Posterior vena cava (tissue), 2 donors: ENCODE measurements at regions of chr12 and their contacts with region 1.

Region 1: GRCh38 chr12:6533923-6534694 is at the start of gene GAPDH:
- DNase-seq: peak; percentile 98
- total RNA-seq, gene GAPDH: 2,037 to 2,666 TPM

Region 2: GRCh38 chr12:6195665-6196535 is 338.2 kb before region 1 on chr12:
- intact Hi-C with region 1: loop called in 1 of 2 experiments (anchors 10 kb)
- DNase-seq: peak; percentile 93

Region 3: GRCh38 chr12:6335451-6336078 is 198.5 kb before region 1 on chr12:
- intact Hi-C with region 1: loop called in 1 of 2 experiments (anchors 5 kb)
- DNase-seq: peak; percentile 95

Region 4: DNA sequence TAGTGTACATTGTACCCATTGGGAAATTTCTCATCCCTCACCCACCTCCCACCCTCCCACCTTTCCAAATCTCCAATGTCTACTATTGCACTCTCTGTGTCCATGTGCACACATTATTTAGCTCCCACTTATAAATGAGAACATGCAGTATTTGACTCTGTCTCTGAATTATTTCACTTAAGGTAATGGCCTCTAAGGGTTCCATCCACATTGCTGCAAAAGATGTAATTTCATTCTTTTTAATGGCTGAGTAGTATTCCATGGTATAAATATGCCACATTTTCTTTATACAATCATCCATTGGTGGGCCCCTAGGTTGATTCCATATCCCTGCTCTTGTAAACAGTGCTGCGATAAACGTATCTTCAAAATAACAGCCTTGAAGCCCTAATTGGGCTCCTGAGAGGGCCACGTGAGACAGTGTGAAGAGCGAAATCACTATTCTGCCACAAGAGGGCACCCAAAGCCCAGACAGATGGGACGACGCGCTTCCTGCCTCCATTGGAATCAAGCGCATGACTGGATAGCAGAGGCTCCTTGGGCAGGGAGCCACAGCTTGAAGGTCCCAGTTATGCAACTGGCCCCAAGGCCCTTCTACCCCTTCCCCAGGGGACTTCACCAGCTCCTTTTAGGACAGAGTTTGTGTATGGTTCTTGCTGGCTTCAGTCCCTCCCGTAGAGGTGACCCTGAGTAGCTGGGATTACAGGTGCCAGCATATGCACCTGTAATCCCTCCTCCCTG is 110.7 kb before region 1 on chr12:
- intact Hi-C with region 1: loop called (anchors 5 kb)
- DNase-seq: peak; percentile 95

Region 5: DNA sequence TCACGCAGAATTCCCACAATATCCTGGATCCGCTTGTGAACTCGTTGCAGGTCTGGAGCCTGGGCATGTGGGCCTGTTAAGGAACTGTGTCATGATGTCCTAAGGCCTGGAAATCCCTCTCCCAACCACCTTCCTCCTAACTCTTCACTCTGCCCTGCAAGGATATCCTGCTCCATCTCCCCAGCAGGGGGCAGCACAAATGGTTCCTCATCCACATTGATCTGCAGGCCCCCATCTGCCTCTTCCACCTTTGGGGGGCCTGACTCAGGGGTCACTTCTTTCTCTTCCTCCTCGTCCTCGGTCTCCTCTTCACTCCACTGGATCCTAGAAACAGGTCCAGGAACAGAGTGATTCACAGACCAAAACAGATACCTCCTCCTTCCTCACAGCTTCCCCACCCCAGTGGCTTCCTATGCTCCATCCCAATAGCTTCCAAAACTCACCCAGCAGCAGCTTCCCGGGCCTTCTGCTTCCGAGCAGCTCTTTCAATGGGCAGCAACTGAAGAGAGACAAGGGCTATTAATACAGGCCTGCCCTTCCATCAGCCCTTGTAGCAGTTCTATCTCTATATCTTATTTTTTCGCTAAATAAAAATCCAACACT is 29.4 kb after region 1 on chr12:
- intact Hi-C with region 1: no loop called
- DNase-seq: no peak